Upper lobe of right lung (tissue), 1 donor: ENCODE measurements at regions of chr19 and their contacts with region 1.

Region 1: GRCh38 chr19:47697863-47698609 is 15.2 kb upstream of the EHD2 start:
- DNase-seq: peak; percentile 84
- ATAC-seq: peak; percentile 94
- H3K4me3 ChIP-seq: no peak overlapping the region
- H3K27ac ChIP-seq: peak overlapping the region; percentile 34
- H3K4me1 ChIP-seq: no peaks in the 10 kb centered on the region
- H3K27me3 ChIP-seq: no peaks in the 10 kb centered on the region
- CTCF ChIP-seq: peak; percentile 97

Region 2: DNA sequence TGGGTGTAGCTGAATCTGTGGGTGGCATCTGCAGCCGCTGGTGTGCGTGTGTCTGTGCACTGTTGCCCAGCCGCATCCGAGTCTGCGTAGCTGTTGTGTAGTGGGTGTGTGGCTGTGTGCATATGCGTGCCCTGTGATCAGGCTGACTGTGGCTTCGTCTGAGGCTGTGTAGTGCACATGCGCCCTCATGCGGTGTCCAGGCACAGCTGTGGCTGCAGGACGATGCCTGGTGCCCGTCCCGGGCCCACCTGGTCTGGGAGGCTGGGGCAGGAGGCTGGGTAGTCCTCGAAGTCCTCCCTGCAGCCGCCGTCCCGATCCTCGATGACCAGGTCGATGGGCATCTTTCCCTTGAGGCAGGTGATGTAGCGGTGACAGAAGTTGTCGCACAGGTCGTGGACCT is 283.6 kb before region 1 on chr19:
- intact Hi-C with region 1: no loop called
- DNase-seq: no peak
- ATAC-seq: peak; percentile 12
- H3K4me3 ChIP-seq: no peak overlapping the region
- H3K27ac ChIP-seq: no peak overlapping the region
- H3K4me1 ChIP-seq: no peaks in the 10 kb centered on the region
- H3K27me3 ChIP-seq: peaks cover 20% of the 10 kb centered on the region
- CTCF ChIP-seq: no peak

Region 3: GRCh38 chr19:47436712-47437401 is 261.2 kb before region 1 on chr19:
- intact Hi-C with region 1: loop called (anchors 5 kb)
- DNase-seq: peak; percentile 87
- ATAC-seq: peak; percentile 97
- H3K4me3 ChIP-seq: no peak overlapping the region
- H3K27ac ChIP-seq: no peak overlapping the region
- H3K4me1 ChIP-seq: no peaks in the 10 kb centered on the region
- H3K27me3 ChIP-seq: peaks cover 62% of the 10 kb centered on the region
- CTCF ChIP-seq: peak; percentile 87

Region 4: DNA sequence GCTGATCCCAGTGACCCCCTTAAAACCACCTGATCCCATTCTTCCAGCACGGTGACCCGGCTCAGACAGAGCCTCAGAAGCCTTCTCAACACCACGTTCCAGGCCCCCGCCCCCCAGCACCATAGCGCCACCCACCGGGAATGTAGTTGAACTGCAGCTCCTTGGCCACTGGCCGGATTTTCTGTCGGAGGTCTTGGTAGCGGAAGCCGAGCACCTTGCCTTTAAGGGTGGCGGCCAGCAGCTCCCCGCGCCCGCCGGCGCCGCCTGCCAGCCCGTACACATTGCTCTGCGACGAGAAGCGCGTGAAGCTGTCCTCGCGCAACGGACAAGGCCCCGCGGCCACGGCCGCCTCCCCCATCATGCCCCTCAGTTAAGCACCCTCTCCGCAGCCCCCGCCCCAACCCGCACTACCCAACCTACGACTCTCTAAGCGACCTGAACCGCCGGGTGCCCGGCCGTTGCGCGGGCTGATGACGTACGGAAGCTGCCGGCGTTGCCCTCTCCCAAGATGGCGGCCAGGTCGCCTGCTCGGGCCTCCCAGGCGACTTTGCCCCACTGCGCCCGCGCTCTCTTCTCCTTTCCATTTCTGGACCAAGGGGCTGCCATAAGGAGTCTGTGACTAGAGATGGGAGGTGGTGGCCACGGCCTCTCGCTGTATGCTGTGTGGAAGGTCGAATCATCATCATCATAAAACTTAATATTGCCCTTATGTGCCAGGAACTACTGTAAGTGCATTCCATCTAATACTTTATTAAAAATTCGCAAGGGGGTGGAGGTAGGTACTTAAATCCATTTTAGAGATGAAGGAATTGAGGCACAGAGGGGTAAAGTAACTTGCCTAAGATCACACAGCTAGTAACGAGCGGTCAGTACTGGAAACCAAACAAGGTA is 214.0 kb before region 1 on chr19 and contains the start of gene KPTN:
- intact Hi-C with region 1: no loop called
- DNase-seq: peak; percentile 95
- ATAC-seq: peak; percentile 92
- H3K4me3 ChIP-seq: peak within 1 kb of the TSS; percentile 71
- H3K27ac ChIP-seq: peak within 1 kb of the TSS; percentile 93
- H3K4me1 ChIP-seq: peaks cover 11% of the 10 kb centered on the region
- H3K27me3 ChIP-seq: no peaks in the 10 kb centered on the region
- CTCF ChIP-seq: peak; percentile 87
- total RNA-seq, gene KPTN: 9.3 TPM

Region 5: GRCh38 chr19:47609906-47610894 is 87.8 kb before region 1 on chr19:
- intact Hi-C with region 1: loop called (anchors 10 kb)
- DNase-seq: peak; percentile 76
- ATAC-seq: peak; percentile 3
- H3K4me3 ChIP-seq: peak overlapping the region; percentile 99
- H3K27ac ChIP-seq: peak overlapping the region; percentile 98
- H3K4me1 ChIP-seq: peaks cover 28% of the 10 kb centered on the region
- H3K27me3 ChIP-seq: no peaks in the 10 kb centered on the region
- CTCF ChIP-seq: no peak

Region 6: GRCh38 chr19:47633519-47633918 is 64.5 kb before region 1 on chr19:
- intact Hi-C with region 1: no loop called
- DNase-seq: no peak
- ATAC-seq: no peak
- H3K4me3 ChIP-seq: no peak overlapping the region
- H3K27ac ChIP-seq: no peak overlapping the region
- H3K4me1 ChIP-seq: peaks cover 21% of the 10 kb centered on the region
- H3K27me3 ChIP-seq: no peaks in the 10 kb centered on the region
- CTCF ChIP-seq: no peak